ENCODE measurements at regions of chr4 and their contacts with region 1.

Region 1: GRCh38 chr4:155787113-155787710 is 28.4 kb downstream of the GUCY1B1 start:
- DNase-seq: no peak
- ATAC-seq: peak; percentile 97
- H3K4me3 ChIP-seq: peak overlapping the region in 1 of 3 donors; percentile 1
- H3K27ac ChIP-seq: no peak overlapping the region
- H3K4me1 ChIP-seq: peaks cover 0 to 13% (median 0%) of the 10 kb centered on the region in 4 donors
- H3K27me3 ChIP-seq: no peaks in the 10 kb centered on the region
- CTCF ChIP-seq: peak; percentile 75 to 95 (median 78)
- POLR2A ChIP-seq: no peak

Region 2: DNA sequence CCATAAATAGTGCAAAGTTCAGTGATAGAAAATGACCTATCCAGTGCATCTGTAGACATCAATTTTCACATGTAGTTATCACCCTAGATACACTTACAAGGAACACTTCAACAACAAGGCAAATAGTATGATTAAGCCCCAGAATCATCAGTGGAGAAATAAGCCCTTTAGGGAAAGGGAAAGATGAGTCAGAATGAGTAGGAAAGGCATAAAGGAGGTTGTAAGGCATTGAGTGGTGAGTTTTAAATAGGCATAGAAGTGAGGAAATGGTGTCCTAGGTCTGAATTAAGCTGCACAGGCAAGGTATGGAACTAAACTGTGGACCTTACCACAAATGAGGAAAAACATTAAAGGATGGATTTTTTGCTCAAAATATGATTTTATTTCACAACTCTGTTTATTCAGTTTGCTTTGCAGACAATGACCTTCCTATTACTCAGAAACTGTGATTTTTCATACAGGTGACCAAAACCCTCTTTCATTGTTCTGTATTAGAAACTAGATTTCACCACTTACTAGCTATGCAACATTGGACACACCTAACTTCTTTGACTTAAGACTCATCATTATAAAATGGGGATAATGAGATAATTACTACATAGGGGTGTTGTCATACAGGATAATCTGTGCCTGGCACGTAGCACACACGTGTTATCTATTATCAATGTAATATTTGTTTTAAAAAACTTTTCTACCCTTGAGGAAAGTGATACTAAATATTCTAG is 353.4 kb before region 1 on chr4:
- intact Hi-C with region 1: loop called in 1 of 2 experiments (anchors 10 kb)
- DNase-seq: no peak
- ATAC-seq: no peak
- H3K4me3 ChIP-seq: no peak overlapping the region
- H3K27ac ChIP-seq: no peak overlapping the region
- H3K4me1 ChIP-seq: no peaks in the 10 kb centered on the region
- H3K27me3 ChIP-seq: no peaks in the 10 kb centered on the region
- CTCF ChIP-seq: no peak
- POLR2A ChIP-seq: no peak

Region 3: GRCh38 chr4:155911905-155912304 is 124.7 kb after region 1 on chr4:
- intact Hi-C with region 1: no loop called
- DNase-seq: no peak
- ATAC-seq: no peak
- H3K4me3 ChIP-seq: no peak overlapping the region
- H3K27ac ChIP-seq: peak overlapping the region in 1 of 3 donors; percentile 21
- H3K4me1 ChIP-seq: peaks cover 0 to 32% (median 3%) of the 10 kb centered on the region in 4 donors
- H3K27me3 ChIP-seq: no peaks in the 10 kb centered on the region
- CTCF ChIP-seq: no peak
- POLR2A ChIP-seq: no peak

Region 4: DNA sequence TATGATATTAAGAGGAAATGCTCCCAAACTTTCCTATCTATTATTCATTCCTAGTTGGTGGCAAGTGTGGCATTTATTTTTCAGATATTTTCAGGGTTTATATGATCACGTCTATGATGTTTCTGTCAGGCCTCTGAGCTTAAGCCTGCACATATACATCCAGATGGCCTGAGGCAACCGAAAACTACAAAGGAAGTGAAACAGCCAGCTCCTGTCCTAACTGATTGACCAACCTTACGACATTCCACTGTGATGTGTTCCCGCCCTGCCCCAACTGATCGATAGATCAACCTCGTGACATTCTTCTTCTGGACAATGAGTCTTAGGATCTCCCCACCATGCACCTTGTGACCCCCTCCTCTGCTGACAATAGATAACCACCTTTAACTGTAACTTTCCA is 234.1 kb after region 1 on chr4:
- intact Hi-C with region 1: no loop called
- DNase-seq: no peak
- ATAC-seq: no peak
- H3K4me3 ChIP-seq: no peak overlapping the region
- H3K27ac ChIP-seq: no peak overlapping the region
- H3K4me1 ChIP-seq: no peaks in the 10 kb centered on the region
- H3K27me3 ChIP-seq: no peaks in the 10 kb centered on the region
- CTCF ChIP-seq: no peak
- POLR2A ChIP-seq: no peak

Region 5: GRCh38 chr4:156146571-156146970 is 359.4 kb after region 1 on chr4:
- intact Hi-C with region 1: no loop called
- DNase-seq: no peak
- ATAC-seq: no peak
- H3K4me3 ChIP-seq: no peak overlapping the region
- H3K27ac ChIP-seq: no peak overlapping the region
- H3K4me1 ChIP-seq: no peaks in the 10 kb centered on the region
- H3K27me3 ChIP-seq: no peaks in the 10 kb centered on the region
- CTCF ChIP-seq: no peak
- POLR2A ChIP-seq: no peak